Mammary epithelial cell (primary cell): ENCODE measurements at regions of chr9 and their contacts with region 1.

Region 1: GRCh38 chr9:15977438-15977837 is 424.6 kb downstream of the CCDC171 start:
- DNase-seq: no peak
- H3K4me3 ChIP-seq: no peak overlapping the region
- H3K27ac ChIP-seq: no peak overlapping the region
- H3K4me1 ChIP-seq: no peaks in the 10 kb centered on the region
- H3K27me3 ChIP-seq: no peaks in the 10 kb centered on the region
- CTCF ChIP-seq: no peak

Region 2: DNA sequence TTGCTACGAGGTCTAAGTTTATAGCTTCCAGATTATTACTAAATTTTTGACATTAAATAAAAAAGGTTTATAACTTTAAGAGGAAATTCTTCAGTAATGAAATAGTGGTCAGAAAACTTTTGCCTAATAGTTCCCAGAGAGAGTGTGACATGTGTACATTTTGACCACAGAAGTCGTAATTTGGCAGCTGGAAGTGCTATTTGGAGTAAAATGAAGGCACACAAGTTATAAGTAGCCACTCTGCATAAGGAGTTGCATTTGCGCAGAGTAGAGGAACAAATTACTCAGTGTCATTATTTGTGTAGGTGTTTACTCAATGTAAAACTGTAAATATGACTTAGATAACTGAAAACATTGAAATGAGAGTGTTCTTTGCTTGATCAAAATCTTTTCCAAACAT is 16.2 kb before region 1 on chr9:
- CTCF ChIA-PET with region 1: no interaction called
- dilution Hi-C with region 1: no loop called
- in situ Hi-C with region 1: no loop called
- intact Hi-C with region 1: loop called (anchors 2 kb)
- DNase-seq: no peak
- H3K4me3 ChIP-seq: no peak overlapping the region
- H3K27ac ChIP-seq: no peak overlapping the region
- H3K4me1 ChIP-seq: no peaks in the 10 kb centered on the region
- H3K27me3 ChIP-seq: no peaks in the 10 kb centered on the region
- CTCF ChIP-seq: no peak